Breast epithelium (tissue), 4 donors: ENCODE measurements at regions of chr6 and their contacts with region 1.

Region 1: DNA sequence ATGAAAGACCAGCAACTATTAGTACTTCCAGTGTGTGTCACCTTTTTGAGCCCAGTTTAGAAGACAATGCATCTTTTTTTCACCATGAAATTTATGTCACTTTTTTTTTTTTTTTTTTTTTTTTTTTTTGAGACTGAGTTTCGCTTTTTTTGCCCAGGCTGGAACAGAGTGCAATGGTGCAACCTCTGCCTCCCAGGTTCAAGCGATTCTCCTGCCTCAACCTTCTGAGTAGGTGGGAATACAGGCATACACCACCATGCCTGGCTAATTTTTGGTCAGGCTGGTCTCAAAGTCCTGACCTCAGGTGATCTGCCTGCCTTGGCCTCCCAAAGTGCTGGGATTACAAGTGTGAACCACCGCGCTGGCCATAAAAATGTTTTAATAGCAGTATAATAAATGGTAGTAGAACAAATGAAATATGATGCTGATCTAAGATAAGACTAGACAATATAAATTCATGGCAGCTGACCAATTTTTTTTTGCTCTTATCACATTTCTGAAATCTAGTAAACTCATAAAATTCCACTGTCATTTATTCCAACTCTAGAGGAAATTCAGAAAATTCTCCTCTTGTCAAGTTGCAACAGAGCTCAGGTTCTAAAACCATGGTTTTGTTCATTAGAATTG is 21.3 kb downstream of the NHSL1 start:
- DNase-seq: no peak
- H3K4me3 ChIP-seq: no peak overlapping the region
- H3K27ac ChIP-seq: no peak overlapping the region
- H3K4me1 ChIP-seq: no peaks in the 10 kb centered on the region
- H3K27me3 ChIP-seq: no peaks in the 10 kb centered on the region
- CTCF ChIP-seq: no peak
- POLR2A ChIP-seq: no peak

Region 2: DNA sequence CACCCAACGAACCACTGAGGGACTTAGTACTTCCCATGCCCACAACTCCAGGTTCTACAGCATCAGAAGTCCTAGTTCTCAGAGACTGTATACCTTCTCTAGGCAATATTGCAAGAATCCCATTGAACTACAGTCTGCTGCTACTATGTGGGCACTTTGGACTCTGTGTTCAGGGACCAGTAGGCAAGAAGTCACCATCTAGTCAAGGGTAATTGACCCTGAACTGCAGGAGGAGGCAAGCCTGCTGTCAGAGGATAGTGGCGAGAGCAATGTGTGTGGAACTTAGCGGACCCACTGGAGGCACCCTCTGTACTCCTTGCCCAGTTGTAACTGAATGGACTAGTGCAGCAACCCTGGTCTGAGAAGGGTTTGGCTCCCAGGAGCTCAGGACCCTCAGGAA is 58.3 kb before region 1 on chr6:
- intact Hi-C with region 1: loop called (anchors 2 kb)
- DNase-seq: no peak
- H3K4me3 ChIP-seq: no peak overlapping the region
- H3K27ac ChIP-seq: no peak overlapping the region
- H3K4me1 ChIP-seq: no peaks in the 10 kb centered on the region
- H3K27me3 ChIP-seq: no peaks in the 10 kb centered on the region
- CTCF ChIP-seq: no peak
- POLR2A ChIP-seq: no peak